Calu3 (cell line): ENCODE measurements at regions of chr11 and their contacts with region 1.

Region 1: DNA sequence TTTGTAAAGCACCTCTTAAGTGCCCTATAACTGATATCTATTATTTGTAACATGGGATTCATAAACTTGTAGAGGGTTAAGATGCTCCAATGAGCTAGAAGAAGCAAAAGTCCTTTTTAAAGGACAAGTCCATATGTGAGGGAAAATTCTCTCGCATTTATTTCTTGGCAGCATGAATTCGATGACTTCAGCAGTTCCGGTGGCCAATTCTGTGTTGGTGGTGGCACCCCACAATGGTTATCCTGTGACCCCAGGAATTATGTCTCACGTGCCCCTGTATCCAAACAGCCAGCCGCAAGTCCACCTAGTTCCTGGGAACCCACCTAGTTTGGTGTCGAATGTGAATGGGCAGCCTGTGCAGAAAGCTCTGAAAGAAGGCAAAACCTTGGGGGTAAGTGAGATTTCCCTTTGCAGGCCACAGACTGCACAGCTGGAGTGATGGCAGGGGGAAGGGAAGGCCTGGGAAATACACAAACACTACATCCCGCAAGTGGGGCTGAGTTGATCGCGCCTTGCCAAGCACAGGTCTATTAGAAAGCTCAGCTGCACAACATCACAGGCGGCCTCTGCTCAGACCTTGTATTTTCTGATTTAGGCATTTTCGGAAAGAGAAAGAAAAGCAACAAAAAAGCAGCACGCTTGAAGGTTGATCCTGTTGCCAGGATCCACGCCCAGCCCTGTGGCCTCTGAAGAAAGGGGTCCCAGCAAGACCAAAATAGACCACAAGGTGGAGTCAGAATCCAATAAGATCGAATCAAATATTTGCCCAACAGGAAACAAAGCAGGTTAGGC is 1.5 kb downstream of the MS4A8 start:
- DNase-seq: peak; percentile 52
- H3K4me3 Mint-ChIP-seq: no peak overlapping the region
- H3K27ac Mint-ChIP-seq: no peak overlapping the region
- H3K4me1 Mint-ChIP-seq: no peaks in the 10 kb centered on the region
- H3K27me3 Mint-ChIP-seq: peaks cover 6% of the 10 kb centered on the region
- CTCF ChIP-seq: peak; percentile 43

Region 2: GRCh38 chr11:59475176-59475575 is 1225.7 kb before region 1 on chr11:
- CTCF ChIA-PET with region 1: no interaction called
- intact Hi-C with region 1: no loop called
- DNase-seq: no peak
- H3K4me3 Mint-ChIP-seq: no peak overlapping the region
- H3K27ac Mint-ChIP-seq: no peak overlapping the region
- H3K4me1 Mint-ChIP-seq: no peaks in the 10 kb centered on the region
- H3K27me3 Mint-ChIP-seq: peaks cover 38% of the 10 kb centered on the region
- CTCF ChIP-seq: no peak

Region 3: DNA sequence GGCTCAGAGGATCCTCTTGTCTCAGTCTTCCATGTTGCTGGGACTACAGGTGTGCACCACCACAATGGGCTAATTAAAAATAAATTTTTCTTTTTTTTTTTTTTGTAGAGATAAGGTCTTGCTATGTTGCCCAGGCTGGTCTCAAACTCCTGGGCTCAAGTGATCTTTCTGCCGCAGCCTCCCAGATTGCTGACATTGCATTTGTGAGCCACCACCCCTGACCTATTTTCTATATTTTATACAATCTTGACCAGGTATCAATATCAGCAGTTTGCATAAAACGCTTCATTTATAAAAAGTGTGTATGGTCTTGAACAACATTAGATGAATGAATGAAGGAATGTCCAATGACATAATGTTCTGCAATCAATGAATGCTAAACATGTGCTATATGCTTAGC is 954.8 kb before region 1 on chr11:
- CTCF ChIA-PET with region 1: no interaction called
- intact Hi-C with region 1: no loop called
- DNase-seq: no peak
- H3K4me3 Mint-ChIP-seq: no peak overlapping the region
- H3K27ac Mint-ChIP-seq: no peak overlapping the region
- H3K4me1 Mint-ChIP-seq: no peaks in the 10 kb centered on the region
- H3K27me3 Mint-ChIP-seq: no peaks in the 10 kb centered on the region
- CTCF ChIP-seq: no peak

Region 4: DNA sequence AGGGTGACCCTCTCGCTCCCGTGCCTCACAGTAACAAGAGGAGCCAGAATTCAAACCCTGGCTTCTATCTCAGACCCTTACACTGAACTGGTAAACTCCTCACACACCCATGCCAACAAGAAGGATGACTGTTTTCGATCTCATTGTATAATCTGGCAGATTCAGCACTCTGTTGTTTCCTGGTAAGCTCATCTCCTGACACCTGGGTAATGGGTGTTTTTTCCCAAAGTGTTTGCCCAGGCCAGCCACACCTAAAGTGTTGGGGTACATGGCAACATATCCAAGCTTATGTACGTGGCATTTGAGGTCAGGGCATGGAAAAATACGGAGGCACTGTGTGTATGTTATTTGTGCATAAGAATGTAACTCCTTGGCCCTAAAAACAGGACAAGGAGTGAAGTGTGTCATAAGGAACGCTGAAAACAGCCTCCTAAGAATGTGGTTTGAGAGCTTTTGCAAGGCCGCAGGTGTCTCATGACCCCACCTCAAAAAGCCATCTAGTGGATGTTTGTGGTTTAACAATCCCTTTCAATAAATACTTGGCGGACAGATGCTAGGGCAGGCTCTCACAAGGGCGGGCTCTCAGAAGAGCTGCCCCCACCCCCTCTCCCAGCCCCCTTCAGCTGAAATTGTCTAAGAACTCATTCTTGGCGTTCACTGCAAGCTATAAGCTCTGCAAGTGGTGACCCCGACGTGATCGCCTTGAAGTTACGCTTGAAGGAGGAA is 55.6 kb after region 1 on chr11 and contains the start of gene MS4A15:
- CTCF ChIA-PET with region 1: no interaction called
- intact Hi-C with region 1: loop called (anchors 1 kb)
- DNase-seq: peak; percentile 41
- H3K4me3 Mint-ChIP-seq: no peak within 1 kb of the TSS
- H3K27ac Mint-ChIP-seq: no peak within 1 kb of the TSS
- H3K4me1 Mint-ChIP-seq: no peaks in the 10 kb centered on the region
- H3K27me3 Mint-ChIP-seq: peaks cover 73% of the 10 kb centered on the region
- CTCF ChIP-seq: peak; percentile 58
- total RNA-seq, gene MS4A15: not detected in 2 replicates